Sciatic nerve (tissue), 2 donors: ENCODE measurements at regions of chr1 and their contacts with region 1.

Region 1: DNA sequence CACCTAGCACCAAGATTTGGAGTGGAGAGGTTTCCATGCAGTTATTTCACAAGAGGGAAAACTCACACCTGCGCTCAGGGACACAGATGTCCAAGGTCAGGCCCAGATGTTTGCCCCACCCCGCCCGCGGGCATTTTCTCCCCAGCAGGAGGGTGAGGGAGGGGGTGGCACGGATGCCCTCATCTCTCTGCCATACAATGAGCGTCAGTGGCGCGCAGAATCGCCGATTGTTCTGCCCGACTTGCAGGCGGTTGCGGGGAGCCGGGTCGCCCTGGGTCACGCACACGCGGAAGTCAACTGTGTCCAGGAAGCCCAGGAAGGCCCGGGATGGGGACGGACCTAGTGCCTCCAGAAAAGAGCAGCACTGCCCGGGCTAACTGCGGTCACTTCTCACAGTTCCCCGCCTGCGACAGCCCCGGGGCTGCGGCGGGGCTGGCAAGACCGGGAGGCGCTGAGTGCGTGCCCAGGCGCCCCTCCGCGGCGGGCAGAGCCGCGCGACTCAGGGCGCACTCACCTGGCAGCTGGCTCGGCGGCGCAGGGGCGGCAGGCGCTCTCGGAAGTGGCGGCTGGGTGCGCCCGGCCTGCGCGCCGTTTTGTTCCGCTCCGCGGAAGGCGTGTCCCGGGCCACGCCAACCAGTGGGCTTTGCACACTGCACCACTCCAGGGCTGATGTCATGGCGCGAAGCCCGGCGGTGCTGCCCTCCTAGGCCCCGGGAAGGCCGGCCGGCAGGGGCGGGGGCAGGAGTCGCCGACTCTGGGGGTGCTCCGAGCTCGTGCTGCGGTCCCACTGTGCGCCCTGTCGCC is at the start of gene CSRP1:
- DNase-seq: peak; percentile 93
- ATAC-seq: peak; percentile 90
- total RNA-seq, gene CSRP1: 768 TPM

Region 2: DNA sequence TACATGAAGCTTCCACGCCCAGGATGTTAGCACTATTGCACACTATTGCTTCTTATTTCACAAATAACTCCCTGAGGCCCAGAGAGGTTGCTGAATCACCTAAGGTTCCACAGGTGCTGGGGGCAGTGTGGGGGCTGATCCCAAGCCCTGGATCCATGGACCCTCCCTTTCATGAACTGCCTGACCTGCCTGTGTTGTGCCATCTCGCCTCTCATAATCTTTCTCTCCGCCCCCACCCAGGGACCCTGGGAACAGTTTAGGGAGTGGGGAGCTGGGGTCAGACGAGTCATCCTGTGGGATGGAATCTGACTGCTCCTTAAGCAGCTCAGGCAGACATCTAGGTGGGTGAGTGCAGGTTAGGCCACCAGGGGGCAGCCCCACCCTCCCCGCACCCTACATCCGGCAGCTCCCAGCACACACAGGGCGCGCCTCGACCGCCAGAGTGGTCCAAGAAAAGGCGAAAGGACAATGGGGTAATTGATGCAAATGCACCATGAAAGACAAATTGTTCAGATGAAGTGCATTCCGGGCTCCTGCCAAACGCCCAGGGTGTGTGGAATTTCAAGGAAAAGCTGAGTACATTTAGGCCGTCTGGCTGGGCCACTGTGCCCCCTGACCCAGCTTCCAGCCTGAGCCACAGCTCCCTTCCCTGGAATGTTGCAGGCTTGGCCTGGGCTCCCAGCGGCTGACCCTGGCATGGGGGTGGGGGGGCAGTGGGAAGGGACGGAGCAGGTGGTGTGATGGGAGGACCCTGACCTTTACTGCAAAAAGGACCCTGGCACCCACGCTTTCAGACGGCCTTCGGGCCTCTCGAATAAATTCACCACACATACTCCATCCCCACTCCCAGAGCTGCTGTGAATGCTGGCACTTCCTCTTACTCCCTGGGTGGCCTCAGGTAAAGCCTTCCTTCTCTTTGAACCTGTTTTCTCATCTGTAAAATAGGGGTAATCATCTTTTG is 58.6 kb before region 1 on chr1:
- intact Hi-C with region 1: loop called (anchors 10 kb)
- DNase-seq: peak; percentile 87
- ATAC-seq: peak; percentile 91